Naive thymus-derived CD8-positive, alpha-beta T cell (primary cell): ENCODE measurements at regions of chr1 and their contacts with region 1.

Region 1: GRCh38 chr1:168446081-168446480 is 97.7 kb downstream of the XCL2 start:
- DNase-seq: no peak
- ATAC-seq: no peak
- H3K4me3 Mint-ChIP-seq: peak overlapping the region in 6 of 10 donors; percentile 26 to 65 (median 44)
- H3K27ac Mint-ChIP-seq: peak overlapping the region; percentile 69 to 96 (median 88)
- H3K4me1 Mint-ChIP-seq: peaks cover 51 to 89% (median 62%) of the 10 kb centered on the region in 4 donors
- H3K27me3 Mint-ChIP-seq: no peaks in the 10 kb centered on the region

Region 2: DNA sequence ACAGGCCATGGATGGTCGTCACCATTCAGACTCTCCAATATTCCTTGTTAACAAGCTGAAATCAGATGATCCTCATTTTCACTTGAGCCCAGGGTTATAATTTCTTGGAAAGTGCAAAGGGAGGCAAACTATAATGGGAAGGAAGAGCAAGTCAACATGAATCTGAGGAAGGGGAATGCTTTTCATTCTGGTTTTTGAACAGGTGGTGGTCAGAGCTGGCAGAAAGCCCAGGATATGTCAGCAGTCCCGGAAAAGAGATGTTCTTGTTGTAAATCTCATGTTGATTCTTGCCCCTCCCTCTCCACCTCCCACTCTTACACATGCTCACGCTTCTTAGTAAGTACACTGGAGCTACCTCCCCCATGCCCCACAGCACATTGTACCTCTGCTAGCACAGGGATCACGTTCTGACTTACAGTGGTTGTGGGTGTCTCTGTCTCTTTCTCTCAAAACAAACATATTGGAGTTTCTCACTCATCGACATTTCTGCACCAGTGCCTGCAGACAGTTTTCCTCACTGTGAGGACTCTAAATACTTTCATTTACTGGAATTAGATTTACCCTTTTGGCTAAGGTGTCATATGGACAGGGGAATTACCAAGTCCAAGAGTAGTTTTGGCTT is 20.1 kb after region 1 on chr1:
- POLR2A ChIA-PET with region 1: interaction called, 11 read pairs
- DNase-seq: peak in 7 of 10 donors; percentile 2 to 60 (median 28)
- ATAC-seq: peak; percentile 72 to 92
- H3K4me3 Mint-ChIP-seq: peak overlapping the region in 9 of 10 donors; percentile 1 to 77 (median 57)
- H3K27ac Mint-ChIP-seq: peak overlapping the region; percentile 51 to 96 (median 88)
- H3K4me1 Mint-ChIP-seq: peaks cover 27 to 82% (median 66%) of the 10 kb centered on the region in 4 donors
- H3K27me3 Mint-ChIP-seq: no peaks in the 10 kb centered on the region